ENCODE measurements at regions of chr10 and their contacts with region 1.

Region 1: DNA sequence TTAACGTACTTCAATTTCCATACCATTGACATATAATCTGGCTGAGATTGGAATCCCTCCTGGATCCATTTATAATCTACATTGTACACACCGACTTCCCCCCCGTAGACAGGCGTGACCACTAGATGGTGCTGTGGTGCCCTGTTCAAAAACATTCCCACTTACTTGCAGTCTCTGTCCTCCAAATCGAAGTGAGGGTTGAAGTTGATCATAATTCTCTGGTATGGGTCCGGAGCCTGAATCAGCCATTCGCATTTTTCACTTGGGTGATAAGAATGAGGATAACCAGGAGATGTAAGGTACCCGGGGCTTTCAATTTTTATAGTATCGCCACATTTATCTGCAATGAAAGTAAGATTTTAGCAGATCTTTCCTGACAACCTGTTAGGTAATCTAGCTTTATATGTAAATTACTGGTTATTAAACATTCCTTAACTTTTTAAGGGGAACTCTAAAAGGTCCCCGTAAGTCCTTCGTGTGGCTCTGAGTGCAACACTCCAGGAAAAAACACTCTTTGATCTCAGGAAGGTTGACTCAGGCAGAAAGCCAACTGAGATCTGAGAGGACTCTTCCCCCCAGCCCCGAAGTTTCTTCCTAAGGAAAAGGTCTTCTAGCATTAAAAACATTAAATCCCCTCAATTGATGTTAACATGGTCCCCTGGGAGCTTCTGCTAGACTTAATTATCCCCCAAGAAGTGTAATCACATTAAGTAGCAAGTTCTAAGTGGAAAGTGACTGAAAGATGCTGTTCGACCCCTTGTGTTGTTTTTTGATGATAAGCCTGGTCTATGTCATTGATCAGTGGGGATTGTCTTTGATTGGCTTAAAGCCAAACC is 3.7 kb downstream of the NRP1 start:
- DNase-seq: peak; percentile 84
- H3K4me3 Mint-ChIP-seq: peak overlapping the region; percentile 94
- H3K27ac Mint-ChIP-seq: peak overlapping the region; percentile 46
- H3K4me1 Mint-ChIP-seq: peaks cover 41% of the 10 kb centered on the region
- H3K27me3 Mint-ChIP-seq: no peaks in the 10 kb centered on the region
- CTCF ChIP-seq: peak; percentile 77

Region 2: GRCh38 chr10:33193057-33193700 is 137.6 kb before region 1 on chr10:
- CTCF ChIA-PET with region 1: interaction called, 46 read pairs
- POLR2A ChIA-PET with region 1: interaction called, 12 read pairs
- intact Hi-C with region 1: loop called (anchors 1 kb)
- DNase-seq: peak; percentile 92
- H3K4me3 Mint-ChIP-seq: peak overlapping the region; percentile 47
- H3K27ac Mint-ChIP-seq: peak overlapping the region; percentile 52
- H3K4me1 Mint-ChIP-seq: peaks cover 20% of the 10 kb centered on the region
- H3K27me3 Mint-ChIP-seq: no peaks in the 10 kb centered on the region
- CTCF ChIP-seq: peak; percentile 75

Region 3: GRCh38 chr10:33559105-33559504 is 228.3 kb after region 1 on chr10:
- CTCF ChIA-PET with region 1: interaction called, 3 read pairs
- POLR2A ChIA-PET with region 1: no interaction called
- intact Hi-C with region 1: loop called (anchors 10 kb)
- DNase-seq: peak; percentile 88
- H3K4me3 Mint-ChIP-seq: no peak overlapping the region
- H3K27ac Mint-ChIP-seq: no peak overlapping the region
- H3K4me1 Mint-ChIP-seq: peaks cover 12% of the 10 kb centered on the region
- H3K27me3 Mint-ChIP-seq: no peaks in the 10 kb centered on the region
- CTCF ChIP-seq: peak; percentile 11

Region 4: DNA sequence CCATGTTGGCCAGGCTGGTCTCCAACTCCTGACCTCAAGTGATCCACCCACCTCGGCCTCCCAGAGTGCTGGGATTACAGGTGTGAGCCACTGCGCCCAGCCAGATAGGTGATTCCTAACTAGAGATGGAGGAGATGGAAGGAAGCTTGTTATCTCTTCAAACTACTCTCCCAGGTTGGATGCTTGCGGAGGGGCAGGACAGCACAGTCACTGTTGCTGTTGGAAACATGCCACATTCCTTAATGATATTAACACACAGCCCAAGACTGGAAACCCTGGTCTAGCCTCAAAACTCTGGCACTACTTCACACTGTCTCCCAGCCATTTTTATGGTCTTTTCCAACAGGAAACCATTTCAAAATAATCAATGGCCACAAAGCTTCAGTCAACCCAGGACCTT is 472.5 kb after region 1 on chr10:
- CTCF ChIA-PET with region 1: interaction called, 3 read pairs
- POLR2A ChIA-PET with region 1: no interaction called
- intact Hi-C with region 1: loop called (anchors 1 kb)
- DNase-seq: peak; percentile 74
- H3K4me3 Mint-ChIP-seq: no peak overlapping the region
- H3K27ac Mint-ChIP-seq: no peak overlapping the region
- H3K4me1 Mint-ChIP-seq: peaks cover 12% of the 10 kb centered on the region
- H3K27me3 Mint-ChIP-seq: no peaks in the 10 kb centered on the region
- CTCF ChIP-seq: no peak

Region 5: DNA sequence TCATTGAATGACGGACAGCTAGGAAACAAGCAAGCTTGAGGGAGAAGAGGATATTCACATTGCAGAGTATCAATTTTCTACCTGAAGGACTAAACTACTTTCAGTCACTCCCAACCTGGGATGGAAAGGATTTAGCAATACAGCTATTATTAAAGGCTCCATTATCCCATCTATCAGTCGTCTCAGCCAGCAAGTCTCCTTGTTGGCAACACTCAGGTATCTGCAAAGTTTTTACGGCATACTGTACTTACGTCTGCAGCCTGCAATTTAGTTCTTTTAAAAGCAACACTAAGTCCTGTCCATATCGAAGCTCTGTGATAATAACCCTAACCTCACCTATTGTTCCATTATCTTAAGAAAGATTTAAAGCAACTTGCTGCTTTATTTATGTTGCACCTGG is 794.9 kb after region 1 on chr10:
- CTCF ChIA-PET with region 1: no interaction called
- POLR2A ChIA-PET with region 1: no interaction called
- intact Hi-C with region 1: loop called (anchors 2 kb)
- DNase-seq: no peak
- H3K4me3 Mint-ChIP-seq: no peak overlapping the region
- H3K27ac Mint-ChIP-seq: no peak overlapping the region
- H3K4me1 Mint-ChIP-seq: peaks cover 8% of the 10 kb centered on the region
- H3K27me3 Mint-ChIP-seq: no peaks in the 10 kb centered on the region
- CTCF ChIP-seq: no peak

Region 6: GRCh38 chr10:34254596-34254995 is 923.8 kb after region 1 on chr10:
- CTCF ChIA-PET with region 1: interaction called, 3 read pairs
- POLR2A ChIA-PET with region 1: no interaction called
- intact Hi-C with region 1: loop called (anchors 10 kb)
- DNase-seq: peak; percentile 98
- H3K4me3 Mint-ChIP-seq: peak overlapping the region; percentile 25
- H3K27ac Mint-ChIP-seq: no peak overlapping the region
- H3K4me1 Mint-ChIP-seq: peaks cover 15% of the 10 kb centered on the region
- H3K27me3 Mint-ChIP-seq: no peaks in the 10 kb centered on the region
- CTCF ChIP-seq: no peak

Region 7: DNA sequence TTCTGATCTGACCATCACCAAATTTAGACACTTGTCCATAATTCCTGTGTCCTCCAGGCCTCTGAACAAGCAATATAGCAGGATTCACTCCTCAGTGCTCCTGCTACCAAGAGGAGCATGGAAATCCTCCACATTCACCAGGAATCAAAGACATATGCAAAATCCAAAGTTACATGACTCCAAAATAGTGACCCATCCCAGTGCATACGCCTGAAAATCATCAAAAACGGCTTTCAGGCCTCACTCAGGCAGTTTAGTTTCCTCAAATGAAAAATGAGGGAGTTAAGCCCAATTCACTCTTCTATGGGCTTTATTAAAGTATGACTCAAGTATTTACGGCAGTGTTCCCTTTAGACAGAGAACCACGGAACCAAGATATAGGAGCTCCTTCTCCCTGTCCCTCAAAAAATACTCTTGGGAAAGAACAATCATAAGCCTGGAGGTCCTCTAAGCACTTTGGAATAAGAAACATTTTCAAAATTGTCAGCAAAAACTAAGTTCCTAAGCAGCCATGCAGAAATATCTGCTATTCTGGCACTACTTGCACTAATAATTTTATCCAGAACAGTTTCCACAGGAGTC is 1243.7 kb after region 1 on chr10:
- CTCF ChIA-PET with region 1: interaction called, 4 read pairs
- POLR2A ChIA-PET with region 1: no interaction called
- intact Hi-C with region 1: loop called (anchors 5 kb)
- DNase-seq: no peak
- H3K4me3 Mint-ChIP-seq: no peak overlapping the region
- H3K27ac Mint-ChIP-seq: peak overlapping the region; percentile 78
- H3K4me1 Mint-ChIP-seq: peaks cover 19% of the 10 kb centered on the region
- H3K27me3 Mint-ChIP-seq: no peaks in the 10 kb centered on the region
- CTCF ChIP-seq: no peak